Lower leg skin (tissue), 4 donors: ENCODE measurements at regions of chr6 and their contacts with region 1.

Region 1: GRCh38 chr6:69349771-69350170 is 447.0 kb downstream of the LMBRD1 start:
- DNase-seq: no peak
- H3K4me3 ChIP-seq: no peak overlapping the region
- CTCF ChIP-seq: no peak
- POLR2A ChIP-seq: no peak

Region 2: DNA sequence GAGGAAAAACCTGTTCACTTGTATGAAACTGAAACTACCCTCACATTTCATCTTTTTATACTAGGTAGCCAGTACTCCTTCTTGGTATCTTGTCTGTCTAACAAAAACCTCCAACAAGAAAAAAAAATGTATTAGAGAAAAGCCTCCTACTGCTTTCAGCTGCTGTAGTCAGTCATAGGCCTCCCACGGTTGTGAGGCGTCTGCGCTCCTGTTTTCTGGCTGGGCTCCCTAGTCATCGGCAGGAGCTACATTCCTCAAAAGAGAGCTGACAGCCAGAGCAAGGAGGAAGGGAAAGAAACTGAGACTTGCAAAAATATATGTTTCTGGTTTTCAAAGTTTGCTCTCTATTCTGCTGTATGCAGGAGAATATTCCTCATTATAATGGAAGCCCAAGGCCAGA is 70.0 kb before region 1 on chr6:
- intact Hi-C with region 1: loop called (anchors 2 kb)
- DNase-seq: no peak
- H3K4me3 ChIP-seq: no peak overlapping the region
- CTCF ChIP-seq: no peak
- POLR2A ChIP-seq: no peak

Region 3: DNA sequence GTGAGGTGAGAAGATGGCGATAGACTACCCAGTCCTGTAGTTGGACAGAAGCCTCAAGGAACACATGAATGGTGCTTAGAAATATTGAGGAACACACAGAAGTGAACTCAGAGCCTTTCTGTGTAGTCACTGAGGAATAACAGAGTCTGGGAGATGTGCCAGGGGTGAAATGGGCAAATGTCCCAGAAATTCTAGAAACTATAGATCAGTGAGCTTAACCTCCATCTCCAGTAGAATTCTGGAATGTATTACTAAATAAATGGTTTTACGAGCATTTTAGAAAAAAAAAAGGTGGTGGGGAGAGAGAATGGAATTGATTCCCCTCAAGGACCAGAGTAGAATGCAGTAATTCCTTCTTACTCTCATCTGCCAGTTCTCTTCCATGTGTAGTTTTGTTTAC is 67.0 kb after region 1 on chr6:
- intact Hi-C with region 1: no loop called
- DNase-seq: no peak
- H3K4me3 ChIP-seq: no peak overlapping the region
- CTCF ChIP-seq: no peak
- POLR2A ChIP-seq: no peak